ENCODE measurements at regions of chr7 and their contacts with region 1.

Region 1: DNA sequence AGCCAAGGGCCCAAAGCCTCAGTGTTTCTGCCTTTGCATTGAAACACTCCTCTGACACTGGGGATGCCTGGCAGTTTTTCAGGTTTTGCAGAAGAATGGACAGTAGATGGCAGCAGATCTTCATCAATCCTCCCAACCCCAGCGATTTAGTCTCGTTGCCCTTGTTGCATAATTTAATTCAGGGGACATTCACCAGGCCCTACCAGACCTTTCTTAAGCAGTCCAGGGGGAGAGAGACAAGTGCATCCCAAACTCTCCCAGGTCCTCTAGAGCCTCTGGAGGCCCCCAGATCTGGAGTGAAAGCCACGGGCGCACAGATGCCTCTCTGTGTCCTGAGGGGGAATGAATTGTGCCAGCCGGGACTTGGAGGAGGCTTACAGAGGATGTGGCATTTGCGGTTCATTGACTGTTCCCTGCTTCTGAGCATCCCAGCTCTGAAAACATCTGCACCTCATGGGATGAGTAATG is 29.6 kb downstream of the MINDY4 start:
- DNase-seq: peak; percentile 81
- ATAC-seq: peak; percentile 25
- H3K4me3 ChIP-seq: no peak overlapping the region
- H3K27ac ChIP-seq: no peak overlapping the region; the same call in 1 of the 2 replicates
- H3K4me1 ChIP-seq: peaks cover 48% of the 10 kb centered on the region
- H3K27me3 ChIP-seq: peaks cover 2% of the 10 kb centered on the region; the same call in 1 of the 2 replicates
- CTCF ChIP-seq: peak; percentile 93
- POLR2A ChIP-seq: 0 out of 2 replicates have a peak, but pooled peaks have one; percentile 27
- RAD21 ChIP-seq: peak; percentile 96

Region 2: DNA sequence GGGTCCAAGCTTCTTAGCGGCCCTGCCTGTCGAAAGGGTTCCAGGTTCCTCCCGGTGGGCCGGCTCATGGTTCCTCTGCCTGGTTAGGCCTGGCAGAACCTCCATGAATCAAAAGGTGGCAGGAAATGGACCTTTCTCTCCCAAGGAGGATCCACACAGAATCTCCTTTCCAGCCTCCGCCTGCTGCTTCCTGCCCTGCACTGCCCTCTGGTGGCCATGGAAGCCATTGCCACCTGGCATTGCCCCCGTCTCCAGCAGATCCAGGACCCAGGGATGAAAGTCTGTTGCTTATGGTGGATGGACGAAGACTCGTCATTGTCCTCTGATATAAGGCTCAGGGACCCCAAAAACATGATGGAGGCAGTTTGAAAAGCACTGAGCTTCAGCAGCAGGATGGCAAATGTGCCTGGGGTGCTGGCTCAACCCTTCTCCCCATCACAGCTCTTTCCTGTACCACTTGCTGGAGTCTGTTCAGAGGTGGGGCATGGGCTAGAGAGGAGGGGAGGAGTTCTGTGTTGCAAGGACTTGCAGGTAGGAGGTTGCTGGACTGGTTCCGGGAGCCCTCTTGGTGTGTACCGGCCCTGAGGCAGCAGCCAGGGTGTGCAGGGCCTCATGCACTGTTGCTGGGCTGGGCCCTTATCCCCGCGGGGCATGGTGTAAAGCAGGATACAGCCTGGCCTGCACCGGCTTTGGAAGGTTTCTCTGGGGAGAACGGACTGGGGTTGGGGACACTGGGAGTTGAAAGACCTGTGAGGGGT is 60.2 kb before region 1 on chr7:
- CTCF ChIA-PET with region 1: no interaction called
- POLR2A ChIA-PET with region 1: no interaction called
- dilution Hi-C with region 1: no loop called
- in situ Hi-C with region 1: no loop called
- intact Hi-C with region 1: loop called (anchors 2 kb)
- DNase-seq: peak; percentile 55
- ATAC-seq: peak; percentile 93
- H3K4me3 ChIP-seq: no peak overlapping the region
- H3K27ac ChIP-seq: no peak overlapping the region
- H3K4me1 ChIP-seq: no peaks in the 10 kb centered on the region
- H3K27me3 ChIP-seq: peaks cover 11% of the 10 kb centered on the region
- CTCF ChIP-seq: peak; percentile 94
- POLR2A ChIP-seq: no peak
- RAD21 ChIP-seq: peak; percentile 86

Region 3: GRCh38 chr7:30888747-30889146 is 87.9 kb after region 1 on chr7:
- CTCF ChIA-PET with region 1: no interaction called
- POLR2A ChIA-PET with region 1: no interaction called
- dilution Hi-C with region 1: no loop called
- in situ Hi-C with region 1: no loop called
- intact Hi-C with region 1: loop called (anchors 2 kb)
- DNase-seq: peak; percentile 86
- ATAC-seq: peak; percentile 81
- H3K4me3 ChIP-seq: no peak overlapping the region
- H3K27ac ChIP-seq: no peak overlapping the region
- H3K4me1 ChIP-seq: peaks cover 8% of the 10 kb centered on the region; the same call in 1 of the 2 replicates
- H3K27me3 ChIP-seq: peaks cover 5% of the 10 kb centered on the region; the same call in 1 of the 2 replicates
- CTCF ChIP-seq: no peak
- POLR2A ChIP-seq: no peak
- RAD21 ChIP-seq: no peak

Region 4: DNA sequence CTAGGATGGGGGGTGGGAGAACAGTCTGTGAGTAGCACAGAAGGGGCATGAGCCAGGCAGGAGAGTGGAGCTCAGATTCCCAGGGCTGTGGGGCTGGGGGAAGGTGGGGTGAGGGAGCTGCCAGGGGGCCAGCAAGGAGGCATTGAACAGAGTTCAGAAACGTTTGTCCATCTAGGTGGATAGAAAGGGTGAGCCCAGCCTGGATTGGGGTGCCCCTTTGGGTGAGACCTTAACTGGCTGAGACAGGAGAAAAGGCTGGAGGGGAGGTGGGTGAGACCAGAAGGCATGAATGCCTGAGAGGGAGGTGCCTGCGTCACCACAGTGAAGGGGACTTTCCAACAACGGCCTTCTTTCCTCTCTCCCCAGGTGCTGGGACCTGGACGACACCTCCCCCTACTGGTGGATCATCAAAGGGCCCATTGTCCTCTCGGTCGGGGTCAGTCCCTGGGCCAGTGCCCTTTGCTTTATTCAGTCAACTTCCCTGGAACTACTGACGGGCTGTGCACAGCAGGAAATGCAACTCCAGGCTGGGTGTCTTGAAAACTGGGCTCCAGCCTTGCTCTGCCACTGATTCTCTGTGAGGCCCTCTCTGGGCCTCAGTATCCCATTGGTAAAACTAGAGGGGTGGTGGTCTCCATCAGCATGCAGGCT is 173.9 kb after region 1 on chr7:
- CTCF ChIA-PET with region 1: interaction called, 4 read pairs
- POLR2A ChIA-PET with region 1: no interaction called
- dilution Hi-C with region 1: no loop called
- in situ Hi-C with region 1: loop called (anchors 5 kb)
- intact Hi-C with region 1: loop called (anchors 1 kb)
- DNase-seq: peak; percentile 40
- ATAC-seq: peak; percentile 76
- H3K4me3 ChIP-seq: no peak overlapping the region
- H3K27ac ChIP-seq: no peak overlapping the region
- H3K4me1 ChIP-seq: no peaks in the 10 kb centered on the region
- H3K27me3 ChIP-seq: peaks cover 62% of the 10 kb centered on the region
- CTCF ChIP-seq: peak; percentile 45
- POLR2A ChIP-seq: no peak
- RAD21 ChIP-seq: peak; percentile 51

Region 5: GRCh38 chr7:31443457-31443856 is 642.6 kb after region 1 on chr7:
- CTCF ChIA-PET with region 1: no interaction called
- POLR2A ChIA-PET with region 1: no interaction called
- dilution Hi-C with region 1: no loop called
- in situ Hi-C with region 1: no loop called
- intact Hi-C with region 1: loop called (anchors 10 kb)
- DNase-seq: peak; percentile 45
- ATAC-seq: peak; percentile 81
- H3K4me3 ChIP-seq: no peak overlapping the region
- H3K27ac ChIP-seq: no peak overlapping the region
- H3K4me1 ChIP-seq: no peaks in the 10 kb centered on the region
- H3K27me3 ChIP-seq: no peaks in the 10 kb centered on the region
- CTCF ChIP-seq: peak; percentile 67
- POLR2A ChIP-seq: no peak
- RAD21 ChIP-seq: peak; percentile 58

Region 6: DNA sequence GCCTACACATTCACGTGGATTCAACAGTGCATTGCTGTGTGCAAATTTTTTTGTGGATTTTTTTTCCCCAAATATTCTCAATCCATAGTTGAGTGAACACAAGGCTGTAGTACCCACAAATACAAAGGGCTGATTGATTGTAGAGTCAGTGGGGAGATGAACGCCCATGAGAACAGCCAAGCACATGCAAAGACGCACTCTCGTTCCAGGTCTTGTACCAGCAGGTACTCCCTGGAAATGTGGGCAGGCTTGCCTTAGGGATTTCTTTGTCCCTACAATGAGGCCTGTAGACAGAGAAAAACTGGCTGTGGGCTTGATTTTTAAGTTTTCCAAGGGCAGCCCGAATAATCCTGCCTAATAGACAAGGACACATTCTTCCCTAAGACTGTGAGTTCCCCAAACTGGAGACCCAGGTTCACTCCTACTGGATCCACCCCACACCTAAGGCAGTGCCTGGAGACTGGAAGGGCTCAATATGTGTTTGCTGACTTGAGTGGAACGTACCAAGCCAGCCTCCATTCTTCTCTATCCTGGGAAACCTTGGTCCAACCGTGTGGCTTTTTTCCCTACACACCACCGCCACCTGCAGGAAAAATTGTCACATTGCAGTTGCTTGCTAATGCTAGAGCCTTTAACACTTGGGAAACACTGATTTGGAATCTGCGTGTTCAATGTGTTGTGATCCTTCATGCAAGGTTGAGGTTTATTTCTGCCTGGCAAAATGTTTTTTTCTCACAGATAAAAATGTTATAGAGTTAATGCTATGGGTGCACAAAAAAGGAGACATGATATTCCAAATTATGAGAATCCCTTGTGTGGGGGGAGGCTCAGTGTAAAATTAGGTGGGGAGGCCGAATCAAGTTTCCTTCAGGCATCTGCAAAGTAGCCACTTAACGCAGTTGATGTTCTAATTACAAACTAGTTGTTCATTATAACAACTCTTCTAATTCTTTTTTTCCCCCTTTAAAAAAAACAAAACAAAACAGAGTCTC is 935.5 kb after region 1 on chr7:
- CTCF ChIA-PET with region 1: no interaction called
- POLR2A ChIA-PET with region 1: no interaction called
- dilution Hi-C with region 1: no loop called
- in situ Hi-C with region 1: loop called (anchors 5 kb)
- intact Hi-C with region 1: loop called (anchors 1 kb)
- DNase-seq: peak; percentile 51
- ATAC-seq: peak; percentile 99
- H3K4me3 ChIP-seq: no peak overlapping the region
- H3K27ac ChIP-seq: no peak overlapping the region
- H3K4me1 ChIP-seq: no peaks in the 10 kb centered on the region
- H3K27me3 ChIP-seq: no peaks in the 10 kb centered on the region
- CTCF ChIP-seq: peak; percentile 89
- POLR2A ChIP-seq: no peak
- RAD21 ChIP-seq: peak; percentile 83